ENCODE measurements at regions of chr2 and their contacts with region 1.

Region 1: GRCh38 chr2:196249860-196250259 is 78.5 kb upstream of the STK17B start:
- DNase-seq: peak; percentile 78
- H3K4me3 ChIP-seq: peak overlapping the region; percentile 0
- H3K27ac ChIP-seq: peak overlapping the region; percentile 19
- H3K4me1 ChIP-seq: peaks cover 49% of the 10 kb centered on the region
- CTCF ChIP-seq: 0 out of 2 replicates have a peak, but pooled peaks have one; percentile 20

Region 2: DNA sequence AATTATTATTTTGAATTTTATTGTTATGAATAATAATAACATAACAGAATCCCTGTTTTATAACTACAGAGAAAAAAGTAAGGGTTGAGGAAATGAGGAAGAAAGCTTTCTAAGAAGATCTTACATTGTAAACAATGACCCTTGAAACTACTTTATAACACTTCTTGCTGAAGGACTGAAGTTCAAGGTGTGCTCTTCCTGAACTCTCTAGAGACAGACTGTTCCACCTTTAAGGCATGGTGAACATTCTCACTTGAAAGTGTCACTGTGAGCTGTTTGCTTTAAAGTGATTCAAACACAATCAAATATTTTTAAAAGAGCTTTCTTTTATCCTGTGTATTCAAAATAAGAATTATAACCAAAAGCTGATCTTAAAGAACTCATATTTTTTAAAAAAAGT is 312.7 kb before region 1 on chr2:
- CTCF ChIA-PET with region 1: no interaction called
- POLR2A ChIA-PET with region 1: no interaction called
- intact Hi-C with region 1: no loop called
- DNase-seq: no peak
- H3K4me3 ChIP-seq: no peak overlapping the region
- H3K27ac ChIP-seq: no peak overlapping the region
- H3K4me1 ChIP-seq: no peaks in the 10 kb centered on the region
- CTCF ChIP-seq: no peak

Region 3: GRCh38 chr2:196068271-196069209 is 181.3 kb before region 1 on chr2 and contains the start of gene DNAH7:
- CTCF ChIA-PET with region 1: no interaction called
- POLR2A ChIA-PET with region 1: no interaction called
- intact Hi-C with region 1: no loop called
- DNase-seq: peak; percentile 81
- H3K4me3 ChIP-seq: peak within 1 kb of the TSS; percentile 67
- H3K27ac ChIP-seq: no peak within 1 kb of the TSS
- H3K4me1 ChIP-seq: peaks cover 5% of the 10 kb centered on the region
- CTCF ChIP-seq: peak; percentile 96
- total RNA-seq, gene DNAH7: not detected in 2 replicates

Region 4: DNA sequence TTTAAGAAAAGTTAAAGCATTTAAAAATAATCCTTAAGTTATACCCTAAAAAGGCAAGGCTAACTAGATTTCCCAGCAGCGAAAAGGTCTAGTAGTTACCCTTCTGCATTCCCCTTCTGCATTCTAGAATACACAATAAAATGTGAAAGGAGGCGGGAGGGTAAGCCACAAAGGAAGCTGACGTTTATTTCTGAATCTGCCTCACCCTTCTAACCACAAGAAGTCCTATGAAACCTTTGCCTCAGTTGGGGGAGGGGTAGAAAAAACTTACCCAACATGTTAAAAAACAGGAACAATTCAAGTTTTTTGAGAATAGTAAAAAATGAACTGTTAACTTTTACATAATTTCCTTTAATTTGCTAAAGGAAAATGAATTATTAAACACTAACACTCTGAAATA is 89.8 kb before region 1 on chr2:
- CTCF ChIA-PET with region 1: no interaction called
- POLR2A ChIA-PET with region 1: interaction called, 16 read pairs
- intact Hi-C with region 1: no loop called
- DNase-seq: peak; percentile 91
- H3K4me3 ChIP-seq: peak overlapping the region; percentile 54
- H3K27ac ChIP-seq: peak overlapping the region; percentile 82
- H3K4me1 ChIP-seq: peaks cover 84% of the 10 kb centered on the region
- CTCF ChIP-seq: no peak

Region 5: GRCh38 chr2:196263181-196263747 is 13.4 kb after region 1 on chr2:
- CTCF ChIA-PET with region 1: interaction called, 8 read pairs
- POLR2A ChIA-PET with region 1: interaction called, 74 read pairs
- intact Hi-C with region 1: no loop called
- DNase-seq: peak; percentile 72
- H3K4me3 ChIP-seq: peak overlapping the region; percentile 39
- H3K27ac ChIP-seq: peak overlapping the region; percentile 65
- H3K4me1 ChIP-seq: peaks cover 70% of the 10 kb centered on the region
- CTCF ChIP-seq: no peak

Region 6: GRCh38 chr2:196268538-196269338 is 18.9 kb after region 1 on chr2:
- CTCF ChIA-PET with region 1: no interaction called
- POLR2A ChIA-PET with region 1: interaction called, 31 read pairs
- intact Hi-C with region 1: no loop called
- DNase-seq: peak; percentile 48
- H3K4me3 ChIP-seq: peak overlapping the region; percentile 36
- H3K27ac ChIP-seq: peak overlapping the region; percentile 66
- H3K4me1 ChIP-seq: peaks cover 89% of the 10 kb centered on the region
- CTCF ChIP-seq: no peak